ENCODE measurements at regions of chr12 and their contacts with region 1.

Region 1: GRCh38 chr12:124305776-124306685 is 11.1 kb downstream of the RFLNA start:
- DNase-seq: peak in 1 of 5 donors; percentile 48
- ATAC-seq: no peak
- H3K4me3 ChIP-seq: no peak overlapping the region
- H3K27ac ChIP-seq: no peak overlapping the region
- H3K4me1 ChIP-seq: no peaks in the 10 kb centered on the region
- H3K27me3 ChIP-seq: no peaks in the 10 kb centered on the region
- CTCF ChIP-seq: no peak
- POLR2A ChIP-seq: no peak

Region 2: GRCh38 chr12:124073304-124074035 is 232.6 kb before region 1 on chr12:
- intact Hi-C with region 1: loop called in 1 of 10 experiments (anchors 5 kb)
- DNase-seq: no peak
- ATAC-seq: no peak
- H3K4me3 ChIP-seq: no peak overlapping the region
- H3K27ac ChIP-seq: no peak overlapping the region
- H3K4me1 ChIP-seq: no peaks in the 10 kb centered on the region
- H3K27me3 ChIP-seq: no peaks in the 10 kb centered on the region
- CTCF ChIP-seq: no peak
- POLR2A ChIP-seq: no peak

Region 3: DNA sequence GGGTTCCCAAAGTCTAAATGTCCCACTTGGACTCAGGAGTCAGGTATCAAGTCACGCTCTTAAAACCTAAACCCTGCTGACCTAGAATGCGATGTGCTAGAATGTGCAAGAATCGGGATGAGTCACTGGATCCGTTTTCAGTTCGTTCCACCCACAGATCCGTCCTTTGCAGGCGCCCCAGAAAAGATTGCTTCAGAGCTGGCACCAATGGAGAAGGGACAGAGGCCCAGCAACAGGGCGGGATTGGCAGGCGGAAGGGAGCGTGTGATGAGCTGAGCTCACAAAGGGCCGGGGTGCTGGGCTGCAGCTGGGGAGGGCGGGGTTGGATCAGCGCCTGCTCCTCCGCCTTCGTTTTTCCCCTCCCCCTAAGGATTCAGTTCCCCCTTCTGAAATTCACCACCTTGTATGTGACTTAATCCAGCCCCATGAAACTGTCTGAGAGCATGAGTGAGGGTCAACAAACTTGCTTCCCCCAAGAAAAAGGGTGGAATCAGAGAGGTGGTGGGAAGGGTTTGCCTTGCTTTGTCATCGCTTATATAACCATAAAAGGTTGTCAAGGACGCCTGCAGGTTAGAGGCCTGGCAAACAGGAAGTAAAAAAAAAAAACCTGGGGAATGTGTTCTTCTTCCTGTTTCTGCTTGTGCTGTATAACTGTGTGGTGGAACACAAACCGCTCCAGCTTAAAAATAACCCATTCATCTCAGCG is 611.3 kb after region 1 on chr12:
- intact Hi-C with region 1: no loop called
- DNase-seq: peak; percentile 97 to 99 (median 98)
- ATAC-seq: peak; percentile 90 to 94 (median 93)
- H3K4me3 ChIP-seq: peak overlapping the region in 11 of 12 donors; percentile 22 to 97 (median 80)
- H3K27ac ChIP-seq: peak overlapping the region; percentile 99 to 100 (median 100)
- H3K4me1 ChIP-seq: peaks cover 0 to 72% (median 51%) of the 10 kb centered on the region in 12 donors
- H3K27me3 ChIP-seq: no peaks in the 10 kb centered on the region
- CTCF ChIP-seq: no peak
- POLR2A ChIP-seq: peak in 1 of 2 donors; percentile 67

Measured in heart left ventricle (tissue), 16 donors.